Panc1 (cell line): ENCODE measurements at regions of chr5 and their contacts with region 1.

Region 1: GRCh38 chr5:146860213-146860893 is 18.2 kb downstream of the PPP2R2B start:
- DNase-seq: no peak
- ATAC-seq: peak; percentile 92
- H3K4me3 ChIP-seq: no peak overlapping the region
- H3K27ac ChIP-seq: peak overlapping the region; percentile 55
- H3K4me1 ChIP-seq: peaks cover 13% of the 10 kb centered on the region; the same call in 1 of the 2 replicates
- H3K27me3 ChIP-seq: no peaks in the 10 kb centered on the region
- CTCF ChIP-seq: no peak

Region 2: DNA sequence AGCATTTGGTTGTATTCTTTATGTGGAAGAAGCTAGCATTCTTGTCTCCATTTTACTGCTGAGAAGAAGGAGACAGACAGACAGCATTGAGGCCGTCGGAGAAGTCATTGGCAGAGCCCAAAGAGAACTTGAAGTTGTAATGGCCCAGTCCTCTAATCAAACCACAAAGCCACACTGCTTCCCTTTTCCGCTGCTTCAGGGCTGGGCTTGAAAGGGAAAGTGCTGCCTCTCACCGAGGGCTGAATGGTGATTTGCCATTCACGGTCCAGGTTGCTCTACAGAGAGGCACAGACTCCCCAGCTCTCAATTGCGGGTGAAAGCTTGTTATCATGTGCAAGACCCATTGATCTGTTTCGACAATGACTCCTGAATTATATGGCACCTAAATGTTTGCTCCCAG is 547.3 kb before region 1 on chr5:
- CTCF ChIA-PET with region 1: no interaction called
- POLR2A ChIA-PET with region 1: no interaction called
- in situ Hi-C with region 1: no loop called
- intact Hi-C with region 1: no loop called
- DNase-seq: no peak
- ATAC-seq: no peak
- H3K4me3 ChIP-seq: no peak overlapping the region
- H3K27ac ChIP-seq: no peak overlapping the region
- H3K4me1 ChIP-seq: no peaks in the 10 kb centered on the region
- H3K27me3 ChIP-seq: no peaks in the 10 kb centered on the region; the same call in 1 of the 2 replicates
- CTCF ChIP-seq: no peak

Region 3: GRCh38 chr5:146890733-146891440 is 30.5 kb after region 1 on chr5:
- CTCF ChIA-PET with region 1: no interaction called
- POLR2A ChIA-PET with region 1: interaction called, 13 read pairs
- in situ Hi-C with region 1: no loop called
- intact Hi-C with region 1: no loop called
- DNase-seq: no peak
- ATAC-seq: no peak
- H3K4me3 ChIP-seq: no peak overlapping the region
- H3K27ac ChIP-seq: no peak overlapping the region
- H3K4me1 ChIP-seq: no peaks in the 10 kb centered on the region
- H3K27me3 ChIP-seq: no peaks in the 10 kb centered on the region
- CTCF ChIP-seq: no peak

Region 4: GRCh38 chr5:146947181-146947941 is 87.0 kb after region 1 on chr5:
- CTCF ChIA-PET with region 1: no interaction called
- POLR2A ChIA-PET with region 1: no interaction called
- in situ Hi-C with region 1: no loop called
- intact Hi-C with region 1: no loop called
- DNase-seq: no peak
- ATAC-seq: no peak
- H3K4me3 ChIP-seq: no peak overlapping the region
- H3K27ac ChIP-seq: no peak overlapping the region
- H3K4me1 ChIP-seq: no peaks in the 10 kb centered on the region
- H3K27me3 ChIP-seq: no peaks in the 10 kb centered on the region
- CTCF ChIP-seq: peak; percentile 51